ENCODE measurements at regions of chr19 and their contacts with region 1.

Region 1: DNA sequence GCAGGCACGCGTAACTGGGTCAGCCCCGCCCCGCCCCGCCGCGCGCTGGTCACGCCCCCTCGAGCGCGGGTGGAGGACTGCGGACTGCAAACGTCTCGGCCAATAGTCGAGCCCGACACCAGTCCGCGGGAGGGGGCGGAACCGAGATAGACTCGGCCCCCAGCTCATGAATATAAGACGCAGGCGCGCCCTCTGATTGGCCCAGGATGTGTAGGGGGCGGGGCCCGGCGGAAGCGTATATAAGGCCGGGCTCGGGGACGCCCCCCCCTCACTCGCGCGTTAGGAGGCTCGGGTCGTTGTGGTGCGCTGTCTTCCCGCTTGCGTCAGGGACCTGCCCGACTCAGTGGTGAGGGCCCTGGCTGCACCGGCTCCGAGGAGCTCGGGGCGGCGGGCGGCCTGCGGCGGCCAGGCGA is at the start of gene CIRBP:
- DNase-seq: peak; percentile 99 to 100 (median 99)
- ATAC-seq: peak; percentile 80
- H3K4me3 ChIP-seq: peak within 1 kb of the TSS; percentile 65 to 84
- H3K4me3 Mint-ChIP-seq: peak within 1 kb of the TSS; percentile 85
- H3K27ac ChIP-seq: peak within 1 kb of the TSS; percentile 88 to 89
- H3K27ac Mint-ChIP-seq: peak within 1 kb of the TSS; percentile 95
- H3K4me1 ChIP-seq: peaks cover 73% of the 10 kb centered on the region
- H3K4me1 Mint-ChIP-seq: peaks cover 68% of the 10 kb centered on the region
- H3K27me3 ChIP-seq: no peaks in the 10 kb centered on the region
- H3K27me3 Mint-ChIP-seq: no peaks in the 10 kb centered on the region
- CTCF ChIP-seq: no peak
- total RNA-seq, gene CIRBP: 689 to 695 TPM

Region 2: DNA sequence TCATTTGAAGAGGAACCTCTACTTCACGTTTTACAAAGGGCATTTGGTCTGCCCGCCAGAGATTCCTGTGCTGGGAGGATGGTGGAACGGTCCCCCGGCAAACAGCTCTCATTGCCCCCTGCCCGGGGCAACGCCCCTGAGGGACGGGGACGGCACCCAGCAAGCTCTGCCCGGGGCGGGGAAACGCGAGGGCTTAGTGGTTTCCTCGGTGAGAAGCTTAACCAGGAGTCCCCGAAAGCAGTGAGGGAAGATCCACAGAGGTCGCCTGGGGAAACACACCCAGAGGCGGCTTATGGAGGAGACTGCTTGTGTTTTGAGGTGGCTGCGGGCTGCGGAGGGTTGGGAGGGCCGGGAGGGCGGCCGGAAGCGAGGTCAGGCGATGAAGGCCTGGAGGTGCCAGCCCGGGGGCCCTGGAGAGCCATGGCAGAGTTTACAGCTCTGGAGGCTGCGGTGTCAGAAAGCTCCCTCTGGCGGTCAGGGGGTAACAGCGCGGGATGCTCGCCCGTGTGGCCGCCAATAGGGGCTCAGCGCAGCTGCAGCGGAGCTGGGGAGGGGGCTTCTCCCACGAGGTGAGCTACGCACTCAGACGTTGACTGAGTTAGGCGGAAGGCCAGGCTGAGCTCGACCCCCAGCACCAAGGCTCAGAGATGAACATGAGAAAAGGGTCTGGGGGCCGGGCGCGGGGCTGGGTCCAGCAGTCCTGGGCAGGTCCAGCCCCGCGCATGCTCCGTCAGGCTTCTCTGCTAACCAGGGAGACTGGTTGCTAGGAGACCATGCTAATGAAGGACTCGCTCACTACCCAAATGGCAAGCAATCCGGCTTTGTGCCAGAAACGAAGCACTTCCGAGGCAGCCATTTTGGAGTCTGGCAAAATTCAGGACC is 762.4 kb before region 1 on chr19:
- CTCF ChIA-PET with region 1: no interaction called
- POLR2A ChIA-PET with region 1: no interaction called
- intact Hi-C with region 1: no loop called
- DNase-seq: peak; percentile 83 to 98 (median 94)
- ATAC-seq: peak; percentile 49
- H3K4me3 ChIP-seq: peak overlapping the region; percentile 69 to 80
- H3K4me3 Mint-ChIP-seq: peak overlapping the region; percentile 96
- H3K27ac ChIP-seq: peak overlapping the region; percentile 87 to 98
- H3K27ac Mint-ChIP-seq: peak overlapping the region; percentile 98
- H3K4me1 ChIP-seq: peaks cover 42% of the 10 kb centered on the region
- H3K4me1 Mint-ChIP-seq: peaks cover 41% of the 10 kb centered on the region
- H3K27me3 ChIP-seq: no peaks in the 10 kb centered on the region
- H3K27me3 Mint-ChIP-seq: no peaks in the 10 kb centered on the region
- CTCF ChIP-seq: peak; percentile 93

Region 3: DNA sequence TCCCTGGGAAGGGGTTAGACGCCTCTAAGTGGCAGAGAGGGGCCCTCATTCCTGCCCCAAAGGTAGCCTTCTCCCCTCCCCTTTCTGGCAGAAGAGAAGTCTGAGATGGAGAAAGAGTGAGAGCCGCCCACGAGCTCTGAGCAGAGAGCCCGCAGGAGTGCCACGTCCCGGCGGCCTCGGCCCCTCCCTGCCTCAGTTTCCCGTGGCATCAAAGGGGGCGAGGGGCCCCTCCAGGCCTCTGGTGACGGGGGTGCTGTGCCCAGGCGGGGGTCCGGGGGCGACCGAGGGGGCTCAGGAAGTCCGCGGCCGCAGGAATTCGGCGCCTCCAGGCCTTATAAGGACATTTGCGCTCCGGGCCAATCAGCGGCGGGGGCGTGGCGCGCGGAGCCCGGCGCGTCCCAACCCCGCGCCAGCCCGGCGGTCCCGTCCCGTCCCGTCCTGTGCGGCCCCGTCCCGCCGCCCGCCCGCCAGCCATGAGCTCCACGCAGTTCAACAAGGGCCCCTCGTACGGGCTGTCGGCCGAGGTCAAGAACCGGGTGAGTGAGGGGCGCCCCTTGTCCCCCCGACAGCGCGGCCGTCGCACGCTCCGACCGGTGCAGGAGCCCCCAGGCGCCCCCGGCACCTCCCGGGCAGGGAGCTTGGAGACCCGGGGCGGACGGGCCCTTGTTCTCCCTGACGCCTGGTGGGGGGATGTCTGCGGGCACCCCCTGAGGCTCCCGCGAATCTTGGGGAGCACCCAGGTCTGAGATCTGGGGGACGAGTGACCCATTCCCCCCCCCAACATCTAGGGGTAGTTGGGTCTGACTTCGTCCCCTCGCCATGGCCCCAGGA is 242.7 kb before region 1 on chr19 and contains the start of gene CNN2:
- CTCF ChIA-PET with region 1: no interaction called
- POLR2A ChIA-PET with region 1: interaction called, 12 read pairs
- intact Hi-C with region 1: no loop called
- DNase-seq: peak in 8 of 9 experiments; percentile 48 to 83 (median 68)
- ATAC-seq: peak; percentile 12
- H3K4me3 ChIP-seq: peak within 1 kb of the TSS; percentile 98 to 100
- H3K4me3 Mint-ChIP-seq: peak within 1 kb of the TSS; percentile 96
- H3K27ac ChIP-seq: peak within 1 kb of the TSS; percentile 74 to 82
- H3K27ac Mint-ChIP-seq: peak within 1 kb of the TSS; percentile 95
- H3K4me1 ChIP-seq: peaks cover 27% of the 10 kb centered on the region
- H3K4me1 Mint-ChIP-seq: peaks cover 31% of the 10 kb centered on the region
- H3K27me3 ChIP-seq: no peaks in the 10 kb centered on the region
- H3K27me3 Mint-ChIP-seq: no peaks in the 10 kb centered on the region
- CTCF ChIP-seq: no peak
- total RNA-seq, gene CNN2: 382 to 392 TPM

Region 4: GRCh38 chr19:1103708-1104310 is 165.3 kb before region 1 on chr19 and contains the start of gene GPX4:
- CTCF ChIA-PET with region 1: no interaction called
- POLR2A ChIA-PET with region 1: interaction called, 8 read pairs
- intact Hi-C with region 1: loop called in 1 of 2 experiments (anchors 5 kb)
- DNase-seq: peak; percentile 96 to 100 (median 98)
- ATAC-seq: peak; percentile 88
- H3K4me3 ChIP-seq: peak within 1 kb of the TSS; percentile 73 to 93
- H3K4me3 Mint-ChIP-seq: peak within 1 kb of the TSS; percentile 76
- H3K27ac ChIP-seq: peak within 1 kb of the TSS; percentile 86
- H3K27ac Mint-ChIP-seq: peak within 1 kb of the TSS; percentile 92
- H3K4me1 ChIP-seq: peaks cover 46% of the 10 kb centered on the region
- H3K4me1 Mint-ChIP-seq: peaks cover 27% of the 10 kb centered on the region
- H3K27me3 ChIP-seq: no peaks in the 10 kb centered on the region
- H3K27me3 Mint-ChIP-seq: no peaks in the 10 kb centered on the region
- CTCF ChIP-seq: no peak
- total RNA-seq, gene GPX4: 172 to 174 TPM

Region 5: DNA sequence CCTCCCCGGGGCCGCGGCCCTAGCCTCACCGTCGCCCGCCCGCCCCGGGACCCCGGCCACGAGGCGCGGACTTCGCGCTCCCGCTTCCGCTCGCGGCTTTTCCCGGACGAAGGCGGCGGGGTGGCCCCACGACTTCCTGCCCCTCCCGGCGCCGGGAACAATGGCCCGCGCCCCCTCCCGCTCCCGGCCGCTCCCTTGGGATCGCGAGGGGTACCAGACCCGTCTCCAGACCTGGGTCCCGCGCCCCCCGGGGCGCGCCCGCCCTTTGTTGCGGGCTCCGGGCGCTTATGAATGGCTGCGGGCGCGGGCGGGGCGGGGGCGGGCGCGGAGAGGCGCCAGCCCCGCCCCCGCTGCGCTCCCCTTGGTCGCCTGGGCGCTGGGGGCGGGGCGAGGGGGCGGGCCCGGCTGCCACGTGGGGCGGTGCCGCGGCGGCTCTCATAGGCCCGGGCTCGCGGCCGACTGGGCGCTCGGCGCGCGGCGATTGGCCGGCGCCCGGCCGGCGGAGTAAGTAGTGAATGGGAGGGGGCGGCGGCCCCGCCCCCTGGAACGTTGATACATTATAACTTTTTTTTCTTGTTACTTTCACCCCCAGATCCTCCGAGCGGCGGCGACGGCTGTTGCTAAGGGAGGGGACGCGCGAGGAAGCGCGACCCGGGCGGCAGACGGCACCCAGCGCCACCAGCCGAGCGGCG is 19.6 kb before region 1 on chr19:
- CTCF ChIA-PET with region 1: interaction called, 498 read pairs
- POLR2A ChIA-PET with region 1: interaction called, 271 read pairs
- intact Hi-C with region 1: loop called (anchors 1 kb)
- DNase-seq: peak; percentile 89 to 98 (median 95)
- ATAC-seq: peak; percentile 55
- H3K4me3 ChIP-seq: peak overlapping the region; percentile 86 to 88
- H3K4me3 Mint-ChIP-seq: peak overlapping the region; percentile 87
- H3K27ac ChIP-seq: peak overlapping the region; percentile 83 to 84
- H3K27ac Mint-ChIP-seq: peak overlapping the region; percentile 88
- H3K4me1 ChIP-seq: peaks cover 31% of the 10 kb centered on the region
- H3K4me1 Mint-ChIP-seq: peaks cover 10% of the 10 kb centered on the region
- H3K27me3 ChIP-seq: no peaks in the 10 kb centered on the region
- H3K27me3 Mint-ChIP-seq: no peaks in the 10 kb centered on the region
- CTCF ChIP-seq: no peak

Region 6: DNA sequence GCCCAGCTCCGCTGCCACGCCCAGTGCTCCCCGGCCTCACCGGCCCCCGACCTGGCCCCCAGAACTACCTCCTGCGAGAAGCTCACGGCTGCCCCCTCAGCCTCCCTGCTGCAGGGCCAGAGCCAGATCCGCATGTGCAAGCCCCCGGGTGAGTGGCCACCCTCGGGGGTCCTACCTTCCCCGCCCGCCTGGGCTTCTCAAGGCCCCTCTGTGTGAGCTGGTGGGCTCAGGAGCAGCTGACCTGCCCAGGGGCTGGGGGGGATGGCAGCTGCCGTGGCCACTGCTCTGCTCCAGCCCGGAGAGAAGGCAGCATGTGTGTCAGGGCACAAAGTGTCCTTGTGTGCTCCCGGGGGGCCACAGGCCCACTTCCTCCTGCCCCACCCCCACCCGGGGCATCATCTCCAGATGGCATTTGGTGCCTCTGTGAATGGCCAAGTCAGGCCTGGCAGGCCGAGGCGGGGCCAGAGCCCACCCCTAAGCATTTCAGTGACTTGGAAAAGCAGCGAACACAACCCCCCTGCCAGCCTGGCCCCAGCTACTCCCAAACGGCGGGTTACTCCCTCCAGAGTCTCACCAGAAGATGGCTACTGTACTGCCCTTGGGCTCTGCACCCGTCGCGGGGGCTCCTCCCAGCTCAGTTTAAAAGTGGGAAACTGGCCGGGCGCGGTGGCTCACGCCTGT is 13.4 kb before region 1 on chr19:
- CTCF ChIA-PET with region 1: interaction called, 51 read pairs
- POLR2A ChIA-PET with region 1: interaction called, 60 read pairs
- intact Hi-C with region 1: loop called in 1 of 2 experiments (anchors 1 kb)
- DNase-seq: no peak
- ATAC-seq: no peak
- H3K4me3 ChIP-seq: no peak overlapping the region
- H3K4me3 Mint-ChIP-seq: no peak overlapping the region
- H3K27ac ChIP-seq: peak overlapping the region in 1 of 2 experiments; percentile 29
- H3K27ac Mint-ChIP-seq: peak overlapping the region; percentile 64
- H3K4me1 ChIP-seq: peaks cover 72% of the 10 kb centered on the region
- H3K4me1 Mint-ChIP-seq: peaks cover 42% of the 10 kb centered on the region
- H3K27me3 ChIP-seq: no peaks in the 10 kb centered on the region
- H3K27me3 Mint-ChIP-seq: no peaks in the 10 kb centered on the region
- CTCF ChIP-seq: no peak

Region 7: DNA sequence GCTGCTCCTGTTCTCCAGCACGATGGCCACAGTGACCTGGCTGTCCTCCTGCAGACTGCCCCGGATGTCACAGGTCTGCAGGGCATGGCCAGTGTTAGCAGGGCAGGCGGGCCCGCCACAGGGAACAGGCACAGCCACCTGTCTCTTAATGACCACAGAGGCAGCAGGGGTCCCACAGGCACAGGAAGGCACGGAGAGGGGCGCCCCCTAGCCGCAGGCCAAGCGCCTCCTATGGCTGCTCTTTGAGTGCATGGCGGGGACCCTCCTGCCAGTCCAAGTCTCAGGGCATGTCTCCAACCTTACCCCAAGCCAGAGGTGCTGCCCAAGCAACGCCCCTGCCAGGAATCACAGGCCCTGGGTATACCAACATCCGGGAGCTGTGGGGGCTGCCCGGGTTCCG is 841.8 kb after region 1 on chr19:
- CTCF ChIA-PET with region 1: no interaction called
- POLR2A ChIA-PET with region 1: no interaction called
- intact Hi-C with region 1: no loop called
- DNase-seq: no peak
- ATAC-seq: no peak
- H3K4me3 ChIP-seq: no peak overlapping the region
- H3K4me3 Mint-ChIP-seq: no peak overlapping the region
- H3K27ac ChIP-seq: no peak overlapping the region
- H3K27ac Mint-ChIP-seq: no peak overlapping the region
- H3K4me1 ChIP-seq: no peaks in the 10 kb centered on the region
- H3K4me1 Mint-ChIP-seq: peaks cover 11% of the 10 kb centered on the region
- H3K27me3 ChIP-seq: no peaks in the 10 kb centered on the region
- H3K27me3 Mint-ChIP-seq: no peaks in the 10 kb centered on the region
- CTCF ChIP-seq: no peak

Region 8: GRCh38 chr19:2135474-2136402 is 866.7 kb after region 1 on chr19:
- CTCF ChIA-PET with region 1: no interaction called
- POLR2A ChIA-PET with region 1: no interaction called
- intact Hi-C with region 1: no loop called
- DNase-seq: no peak
- ATAC-seq: no peak
- H3K4me3 ChIP-seq: no peak overlapping the region
- H3K4me3 Mint-ChIP-seq: no peak overlapping the region
- H3K27ac ChIP-seq: no peak overlapping the region
- H3K27ac Mint-ChIP-seq: no peak overlapping the region
- H3K4me1 ChIP-seq: no peaks in the 10 kb centered on the region
- H3K4me1 Mint-ChIP-seq: peaks cover 6% of the 10 kb centered on the region
- H3K27me3 ChIP-seq: no peaks in the 10 kb centered on the region
- H3K27me3 Mint-ChIP-seq: no peaks in the 10 kb centered on the region
- CTCF ChIP-seq: no peak